K562 (cell line): ENCODE measurements at regions of chr19 and their contacts with region 1.

Region 1: DNA sequence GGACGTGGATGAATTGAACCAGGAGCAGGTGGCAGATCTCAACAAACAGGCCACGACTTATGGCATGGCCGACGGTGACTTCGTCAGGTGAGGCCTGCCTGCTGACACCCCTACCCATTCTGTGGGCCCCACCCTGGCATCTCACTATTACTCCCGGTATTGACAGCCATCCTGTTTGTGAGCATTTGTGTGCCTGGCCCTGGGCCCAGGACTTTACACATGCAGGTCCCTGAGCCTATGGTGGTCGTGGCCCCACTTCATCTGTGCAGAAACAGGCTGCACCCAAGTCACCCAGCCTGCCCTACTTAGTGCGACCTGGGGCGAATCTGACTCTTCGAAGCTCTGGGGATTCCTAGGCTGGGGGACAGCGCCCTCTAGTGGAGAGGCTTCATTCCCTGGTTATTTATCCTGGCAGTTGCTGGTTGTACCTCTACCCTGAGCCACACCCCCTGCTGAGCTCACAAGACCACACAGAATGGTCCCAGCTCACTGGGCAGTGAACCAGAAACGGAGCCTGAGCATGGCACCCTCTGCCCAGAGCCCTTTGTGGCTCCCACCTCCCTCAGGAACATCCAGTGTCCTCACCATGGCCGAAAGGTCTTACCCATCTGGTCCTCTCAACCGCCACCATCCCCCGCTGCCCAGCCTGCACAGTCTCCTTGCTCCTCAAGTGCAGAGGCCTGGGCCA is 16.9 kb downstream of the ZNF296 start:
- DNase-seq: peak; percentile 71 to 88 (median 79)
- ATAC-seq: peak; percentile 96
- H3K4me3 ChIP-seq: no peak overlapping the region
- H3K27ac ChIP-seq: no peak overlapping the region
- H3K4me1 ChIP-seq: peaks cover 0 to 29% of the 10 kb centered on the region in 2 experiments; a peak in 2 of 5 replicates
- H3K27me3 ChIP-seq: no peaks in the 10 kb centered on the region
- CTCF ChIP-seq: peak; percentile 89 to 92 (median 92)
- EP300 ChIP-seq: no peak
- POLR2A ChIP-seq: no peak
- RAD21 ChIP-seq: peak; percentile 66 to 83

Region 2: DNA sequence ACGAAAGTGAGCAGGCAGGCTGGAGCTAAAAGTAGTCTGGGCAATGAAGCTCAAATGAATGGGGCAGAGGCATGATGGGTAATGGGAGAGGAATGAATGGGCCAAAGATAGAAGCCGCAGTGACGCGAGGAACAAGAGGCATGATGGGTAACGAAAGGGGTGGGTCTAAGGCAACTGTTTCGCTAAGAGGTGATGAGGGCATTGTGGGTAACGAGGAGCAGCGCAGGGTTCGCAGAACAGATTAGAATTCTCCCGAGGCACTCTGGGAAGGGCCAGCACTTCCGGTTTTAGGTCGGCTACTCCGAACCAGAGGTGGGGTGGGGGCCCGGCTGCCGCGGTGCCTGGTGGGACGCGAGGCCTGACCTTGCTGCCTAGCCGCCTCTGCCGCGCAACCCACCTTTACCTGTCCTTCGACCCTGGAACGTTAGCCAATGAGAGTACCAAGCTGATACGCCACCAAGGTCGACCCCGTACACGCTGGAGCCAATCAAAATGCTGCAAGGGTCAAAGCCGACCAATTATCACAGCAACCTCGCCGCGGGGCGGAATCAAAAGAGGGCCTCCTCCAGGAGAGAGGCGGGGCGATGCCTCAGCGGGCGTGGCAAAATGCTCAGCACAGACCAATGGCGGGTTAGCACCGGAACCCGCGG is 168.9 kb before region 1 on chr19:
- CTCF ChIA-PET with region 1: no interaction called
- POLR2A ChIA-PET with region 1: interaction called, 5 read pairs
- in situ Hi-C with region 1: loop called (anchors 10 kb)
- intact Hi-C with region 1: no loop called
- DNase-seq: peak; percentile 93 to 100 (median 96)
- ATAC-seq: peak; percentile 93
- H3K4me3 ChIP-seq: peak overlapping the region; percentile 46
- H3K27ac ChIP-seq: peak overlapping the region; percentile 96
- H3K4me1 ChIP-seq: peaks cover 17 to 33% of the 10 kb centered on the region in 2 experiments
- H3K27me3 ChIP-seq: no peaks in the 10 kb centered on the region
- CTCF ChIP-seq: no peak
- EP300 ChIP-seq: peak; percentile 46; the same call in 1 of the 2 replicates
- POLR2A ChIP-seq: peak; percentile 98
- RAD21 ChIP-seq: peak in 1 of 2 experiments; percentile 18; a peak in 1 of 4 replicates

Region 3: GRCh38 chr19:44903602-44904425 is 155.6 kb before region 1 on chr19:
- CTCF ChIA-PET with region 1: interaction called, 7 read pairs
- POLR2A ChIA-PET with region 1: interaction called, 3 read pairs
- in situ Hi-C with region 1: loop called (anchors 10 kb)
- intact Hi-C with region 1: loop called (anchors 5 kb)
- DNase-seq: peak; percentile 70 to 86 (median 74)
- ATAC-seq: peak; percentile 81
- H3K4me3 ChIP-seq: no peak overlapping the region
- H3K27ac ChIP-seq: peak overlapping the region; percentile 40
- H3K4me1 ChIP-seq: peaks cover 20 to 67% of the 10 kb centered on the region in 2 experiments; a peak in 4 of 5 replicates
- H3K27me3 ChIP-seq: no peaks in the 10 kb centered on the region
- CTCF ChIP-seq: peak; percentile 93 to 98 (median 94)
- EP300 ChIP-seq: no peak
- POLR2A ChIP-seq: peak; percentile 83
- RAD21 ChIP-seq: peak; percentile 92

Region 4: DNA sequence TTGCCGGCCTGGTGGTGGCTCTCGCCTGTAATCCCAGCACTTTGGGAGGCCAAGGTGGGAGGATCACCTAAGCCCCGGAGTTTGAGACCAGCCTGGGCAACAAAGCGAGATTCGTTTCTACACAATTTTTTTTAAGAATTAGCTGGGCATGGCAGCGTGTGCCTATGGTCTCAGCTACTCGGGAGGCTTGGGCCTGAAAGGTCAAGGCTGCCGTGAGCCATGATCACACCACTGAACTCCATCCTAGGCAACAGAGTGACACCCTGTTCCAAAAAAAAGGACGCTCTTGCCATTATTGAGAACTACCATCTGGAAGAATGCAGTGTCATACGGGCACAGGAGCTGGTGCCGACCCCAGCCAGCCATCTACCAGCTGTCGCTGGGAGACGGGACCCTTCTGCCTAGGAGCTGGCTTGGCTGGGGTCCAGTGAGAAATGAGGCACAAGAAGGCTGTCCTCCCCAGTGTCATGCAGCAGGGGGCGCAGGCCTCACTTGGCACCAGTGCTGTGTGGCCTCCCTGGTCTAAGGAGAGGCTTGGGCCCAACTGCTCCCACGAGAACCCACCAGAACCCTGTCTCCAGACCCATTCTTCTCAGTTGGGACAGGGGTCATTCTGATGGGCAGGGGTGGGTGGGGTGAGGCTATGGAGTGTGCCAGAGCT is 70.4 kb before region 1 on chr19:
- CTCF ChIA-PET with region 1: interaction called, 11 read pairs
- POLR2A ChIA-PET with region 1: no interaction called
- in situ Hi-C with region 1: no loop called
- intact Hi-C with region 1: no loop called
- DNase-seq: peak; percentile 67 to 80 (median 77)
- ATAC-seq: peak; percentile 96
- H3K4me3 ChIP-seq: no peak overlapping the region
- H3K27ac ChIP-seq: no peak overlapping the region
- H3K4me1 ChIP-seq: peaks cover 0 to 20% of the 10 kb centered on the region in 2 experiments; a peak in 2 of 5 replicates
- H3K27me3 ChIP-seq: no peaks in the 10 kb centered on the region
- CTCF ChIP-seq: peak; percentile 75 to 82 (median 80)
- EP300 ChIP-seq: no peak
- POLR2A ChIP-seq: no peak
- RAD21 ChIP-seq: peak; percentile 58 to 72

Region 5: GRCh38 chr19:45016388-45017319 is 42.8 kb before region 1 on chr19:
- CTCF ChIA-PET with region 1: no interaction called
- POLR2A ChIA-PET with region 1: no interaction called
- in situ Hi-C with region 1: no loop called
- intact Hi-C with region 1: loop called (anchors 1 kb)
- DNase-seq: peak; percentile 71 to 86 (median 78)
- ATAC-seq: peak; percentile 98
- H3K4me3 ChIP-seq: no peak overlapping the region
- H3K27ac ChIP-seq: no peak overlapping the region
- H3K4me1 ChIP-seq: peaks cover 0 to 1% of the 10 kb centered on the region in 2 experiments; a peak in 2 of 5 replicates
- H3K27me3 ChIP-seq: no peaks in the 10 kb centered on the region
- CTCF ChIP-seq: peak; percentile 85 to 89 (median 87)
- EP300 ChIP-seq: no peak
- POLR2A ChIP-seq: no peak
- RAD21 ChIP-seq: peak; percentile 65 to 85

Region 6: GRCh38 chr19:45147835-45148676 is 88.6 kb after region 1 on chr19:
- CTCF ChIA-PET with region 1: no interaction called
- POLR2A ChIA-PET with region 1: no interaction called
- in situ Hi-C with region 1: no loop called
- intact Hi-C with region 1: no loop called
- DNase-seq: peak in 1 of 4 experiments; percentile 18
- ATAC-seq: peak; percentile 63
- H3K4me3 ChIP-seq: no peak overlapping the region
- H3K27ac ChIP-seq: no peak overlapping the region
- H3K4me1 ChIP-seq: peaks cover 0 to 65% of the 10 kb centered on the region in 2 experiments; a peak in 2 of 5 replicates
- H3K27me3 ChIP-seq: no peaks in the 10 kb centered on the region
- CTCF ChIP-seq: 0 out of 6 replicates have a peak, but pooled peaks have one; percentile 17 to 27 (median 22)
- EP300 ChIP-seq: no peak
- POLR2A ChIP-seq: no peak
- RAD21 ChIP-seq: no peak; a peak in 1 of 4 replicates

Region 7: DNA sequence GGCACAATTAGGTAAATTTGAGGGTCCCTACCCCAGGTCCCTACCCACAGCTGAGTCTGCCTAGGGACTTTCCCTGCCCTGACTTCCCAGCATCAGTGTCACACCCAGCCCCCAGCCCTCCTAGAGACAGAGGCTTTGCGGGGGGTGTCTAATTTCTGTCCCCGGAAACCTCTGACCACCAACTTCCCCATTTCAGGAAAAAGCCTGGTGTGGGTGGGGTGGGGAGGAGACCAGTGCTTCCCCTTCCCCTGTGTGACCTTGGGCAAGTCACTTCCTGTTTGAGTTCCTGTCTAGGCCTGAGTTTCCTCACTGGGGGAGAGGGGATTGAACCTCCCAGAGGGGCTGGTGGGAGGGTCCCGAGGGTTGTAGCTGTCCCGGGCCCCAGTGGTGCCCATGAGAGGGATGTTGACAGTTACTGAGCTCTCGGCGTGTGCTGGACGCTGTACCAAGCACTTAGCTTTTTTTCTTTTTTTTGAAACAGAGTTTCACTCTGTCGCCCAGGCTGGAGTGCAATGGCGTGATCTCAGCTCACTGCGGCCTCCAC is 455.7 kb after region 1 on chr19:
- CTCF ChIA-PET with region 1: no interaction called
- POLR2A ChIA-PET with region 1: no interaction called
- in situ Hi-C with region 1: no loop called
- intact Hi-C with region 1: no loop called
- DNase-seq: peak; percentile 38 to 84 (median 59)
- ATAC-seq: peak; percentile 69
- H3K4me3 ChIP-seq: no peak overlapping the region
- H3K27ac ChIP-seq: peak overlapping the region; percentile 73
- H3K4me1 ChIP-seq: peaks cover 44 to 45% of the 10 kb centered on the region in 2 experiments
- H3K27me3 ChIP-seq: no peaks in the 10 kb centered on the region
- CTCF ChIP-seq: no peak
- EP300 ChIP-seq: peak; percentile 63
- POLR2A ChIP-seq: no peak
- RAD21 ChIP-seq: no peak